ENCODE measurements at regions of chr1 and their contacts with region 1.

Region 1: DNA sequence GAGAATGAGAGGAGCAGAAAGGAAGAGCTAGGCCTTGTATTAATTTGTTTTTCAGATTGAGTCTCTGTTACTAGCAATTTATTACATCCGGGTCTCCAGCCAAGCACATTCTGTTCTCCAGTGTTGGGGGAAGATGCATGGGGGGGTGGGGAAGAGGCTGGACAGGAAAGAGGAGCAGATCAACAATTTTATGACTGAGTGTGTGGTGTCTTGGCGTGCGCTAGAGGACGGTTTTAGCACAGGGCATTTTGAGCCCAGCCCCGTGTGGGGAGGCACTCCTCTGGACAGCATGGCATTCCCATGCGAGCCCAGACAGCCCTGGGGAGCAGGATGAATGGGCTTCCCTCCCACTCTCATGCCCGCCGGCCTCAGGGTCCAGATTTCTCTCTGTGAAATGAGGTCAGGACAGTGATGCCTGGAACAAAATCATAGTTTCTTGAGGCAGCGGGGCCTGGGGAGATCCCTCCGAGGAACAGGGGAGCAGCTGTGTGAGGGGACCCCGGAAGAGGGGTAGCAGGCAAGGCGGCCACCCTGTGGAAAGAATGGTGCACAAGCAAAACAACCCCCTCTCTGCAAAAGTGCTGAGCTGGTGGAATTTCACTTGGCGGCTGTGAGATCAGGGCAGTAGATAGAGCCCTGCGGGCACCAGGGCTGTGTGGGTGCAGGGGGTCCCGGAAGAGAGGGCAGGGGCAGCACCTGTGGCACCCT is 16.3 kb downstream of the SOX13 start:
- DNase-seq: no peak
- H3K4me3 ChIP-seq: no peak overlapping the region
- H3K27ac ChIP-seq: peak overlapping the region; percentile 9 to 92 (median 59)
- H3K4me1 ChIP-seq: peaks cover 42 to 92% of the 10 kb centered on the region in 2 donors
- H3K27me3 ChIP-seq: no peaks in the 10 kb centered on the region
- CTCF ChIP-seq: peak in 1 of 6 experiments; percentile 11
- POLR2A ChIP-seq: no peak

Region 2: GRCh38 chr1:204025917-204026707 is 63.1 kb before region 1 on chr1:
- intact Hi-C with region 1: no loop called
- DNase-seq: no peak
- H3K4me3 ChIP-seq: no peak overlapping the region
- H3K27ac ChIP-seq: no peak overlapping the region
- H3K4me1 ChIP-seq: no peaks in the 10 kb centered on the region
- H3K27me3 ChIP-seq: no peaks in the 10 kb centered on the region
- CTCF ChIP-seq: no peak
- POLR2A ChIP-seq: no peak

Region 3: GRCh38 chr1:204128964-204129896 is 40.0 kb after region 1 on chr1:
- intact Hi-C with region 1: loop called (anchors 5 kb)
- DNase-seq: peak; percentile 86 to 87
- H3K4me3 ChIP-seq: peak overlapping the region in 1 of 3 donors; percentile 21
- H3K27ac ChIP-seq: peak overlapping the region; percentile 68 to 95 (median 87)
- H3K4me1 ChIP-seq: peaks cover 38 to 40% of the 10 kb centered on the region in 2 donors
- H3K27me3 ChIP-seq: no peaks in the 10 kb centered on the region
- CTCF ChIP-seq: peak; percentile 74 to 93 (median 82)
- POLR2A ChIP-seq: peak in 1 of 2 donors; percentile 48